ENCODE measurements at regions of chr20 and their contacts with region 1.

Region 1: GRCh38 chr20:50992733-50993457 is 30.0 kb downstream of the KCNG1 start:
- DNase-seq: peak in 1 of 4 donors; percentile 33
- ATAC-seq: peak; percentile 49
- H3K4me3 ChIP-seq: no peak overlapping the region
- H3K27ac ChIP-seq: no peak overlapping the region
- H3K4me1 ChIP-seq: no peaks in the 10 kb centered on the region
- H3K27me3 ChIP-seq: peaks cover 0 to 30% of the 10 kb centered on the region in 2 donors
- CTCF ChIP-seq: peak; percentile 16 to 37

Region 2: GRCh38 chr20:51238421-51239305 is 245.8 kb after region 1 on chr20:
- intact Hi-C with region 1: no loop called
- DNase-seq: no peak
- ATAC-seq: no peak
- H3K4me3 ChIP-seq: no peak overlapping the region
- H3K27ac ChIP-seq: no peak overlapping the region
- H3K4me1 ChIP-seq: no peaks in the 10 kb centered on the region
- H3K27me3 ChIP-seq: no peaks in the 10 kb centered on the region
- CTCF ChIP-seq: no peak

Region 3: GRCh38 chr20:51298141-51298749 is 305.4 kb after region 1 on chr20:
- intact Hi-C with region 1: loop called in 1 of 2 experiments (anchors 5 kb)
- DNase-seq: no peak
- ATAC-seq: no peak
- H3K4me3 ChIP-seq: no peak overlapping the region
- H3K27ac ChIP-seq: no peak overlapping the region
- H3K4me1 ChIP-seq: no peaks in the 10 kb centered on the region
- H3K27me3 ChIP-seq: no peaks in the 10 kb centered on the region
- CTCF ChIP-seq: no peak

Region 4: GRCh38 chr20:51306503-51307358 is 313.8 kb after region 1 on chr20:
- intact Hi-C with region 1: loop called in 1 of 2 experiments (anchors 5 kb)
- DNase-seq: peak; percentile 61 to 88 (median 66)
- ATAC-seq: peak; percentile 98
- H3K4me3 ChIP-seq: no peak overlapping the region
- H3K27ac ChIP-seq: no peak overlapping the region
- H3K4me1 ChIP-seq: no peaks in the 10 kb centered on the region
- H3K27me3 ChIP-seq: peaks cover 0 to 17% of the 10 kb centered on the region in 2 donors
- CTCF ChIP-seq: peak; percentile 89 to 94